Left cardiac atrium (tissue), 4 donors: ENCODE measurements at regions of chr10 and their contacts with region 1.

Region 1: GRCh38 chr10:15097011-15097812 is at the start of gene RPP38:
- DNase-seq: peak; percentile 98
- ATAC-seq: peak; percentile 98 to 99
- total RNA-seq, gene RPP38: 9.1 to 9.3 TPM

Region 2: GRCh38 chr10:14954001-14954770 is 143.0 kb before region 1 on chr10 and contains the start of gene DCLRE1C:
- intact Hi-C with region 1: loop called in 1 of 2 experiments (anchors 5 kb)
- DNase-seq: peak; percentile 93
- ATAC-seq: peak; percentile 98
- total RNA-seq, gene DCLRE1C: 3.9 to 5.4 TPM

Region 3: GRCh38 chr10:14959276-14960057 is 137.7 kb before region 1 on chr10 and contains the start of gene MEIG1:
- intact Hi-C with region 1: loop called (anchors 5 to 10 kb)
- DNase-seq: peak; percentile 92
- ATAC-seq: peak; percentile 96 to 99
- total RNA-seq, gene MEIG1: not detected